ENCODE measurements at regions of chr15 and their contacts with region 1.

Region 1: DNA sequence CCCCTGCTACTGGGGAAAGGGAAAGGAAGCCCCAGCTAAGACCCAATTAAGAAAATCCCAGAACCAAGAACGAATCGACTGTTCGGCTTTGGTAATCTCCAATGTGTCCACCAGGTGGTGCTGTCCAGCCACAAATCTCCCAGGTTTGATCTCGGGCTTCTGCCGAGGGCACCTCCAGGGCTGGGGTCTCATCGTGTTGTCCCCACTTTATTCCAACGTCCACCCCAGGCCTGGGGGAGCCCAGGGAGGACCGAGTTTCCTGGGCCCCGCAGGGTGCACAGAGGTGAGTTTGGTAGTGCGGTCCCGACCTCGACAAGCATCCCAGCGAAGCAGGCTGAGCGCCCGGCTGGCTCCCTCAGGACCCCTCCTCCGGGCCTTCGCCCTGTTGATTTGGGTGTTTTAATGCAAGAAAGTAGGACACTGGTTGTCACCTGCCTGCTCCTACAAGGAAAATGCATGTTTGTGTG is 185.1 kb downstream of the GOLGA6L6 start:
- DNase-seq: peak; percentile 63 to 87 (median 80)
- H3K4me3 ChIP-seq: no peak overlapping the region
- H3K4me3 Mint-ChIP-seq: peak overlapping the region in 1 of 8 donors; percentile 53
- H3K27ac ChIP-seq: no peak overlapping the region
- H3K27ac Mint-ChIP-seq: peak overlapping the region in 5 of 7 donors; percentile 11 to 85 (median 48)
- H3K4me1 ChIP-seq: peaks cover 29% of the 10 kb centered on the region
- H3K4me1 Mint-ChIP-seq: peaks cover 3 to 13% (median 6%) of the 10 kb centered on the region in 4 donors
- H3K27me3 ChIP-seq: no peaks in the 10 kb centered on the region
- H3K27me3 Mint-ChIP-seq: peaks cover 0 to 2% of the 10 kb centered on the region in 2 donors

Region 2: DNA sequence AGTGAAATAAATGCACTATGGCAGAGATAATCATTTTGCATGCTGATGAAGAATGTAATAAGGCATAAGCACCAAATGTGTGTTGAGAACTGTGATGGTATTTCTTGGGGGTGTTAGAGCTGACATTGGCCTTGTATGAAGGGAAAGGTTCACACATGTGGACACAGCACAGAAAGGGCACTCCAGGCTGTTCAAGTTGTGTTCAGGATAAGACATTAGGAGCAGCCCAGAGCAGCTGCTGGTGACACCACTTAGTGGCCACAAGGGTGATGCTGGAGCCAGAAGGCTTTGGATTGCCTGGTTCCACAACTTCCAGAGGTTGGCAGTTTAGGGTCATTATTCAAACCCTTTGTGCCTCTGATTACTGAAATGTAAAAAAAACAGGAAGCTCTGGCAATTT is 29.7 kb after region 1 on chr15:
- CTCF ChIA-PET with region 1: no interaction called
- POLR2A ChIA-PET with region 1: no interaction called
- intact Hi-C with region 1: loop called (anchors 2 kb)
- DNase-seq: no peak
- H3K4me3 ChIP-seq: no peak overlapping the region
- H3K4me3 Mint-ChIP-seq: no peak overlapping the region
- H3K27ac ChIP-seq: no peak overlapping the region
- H3K27ac Mint-ChIP-seq: no peak overlapping the region
- H3K4me1 ChIP-seq: no peaks in the 10 kb centered on the region
- H3K4me1 Mint-ChIP-seq: no peaks in the 10 kb centered on the region
- H3K27me3 ChIP-seq: no peaks in the 10 kb centered on the region
- H3K27me3 Mint-ChIP-seq: no peaks in the 10 kb centered on the region

Region 3: GRCh38 chr15:22224241-22224671 is 1867.8 kb after region 1 on chr15:
- CTCF ChIA-PET with region 1: interaction called, 200 read pairs
- POLR2A ChIA-PET with region 1: interaction called, 8 read pairs
- intact Hi-C with region 1: no loop called
- DNase-seq: peak in 1 of 5 donors; percentile 22
- H3K4me3 ChIP-seq: no peak overlapping the region
- H3K4me3 Mint-ChIP-seq: peak overlapping the region in 3 of 8 donors; percentile 2 to 55 (median 22)
- H3K27ac ChIP-seq: no peak overlapping the region
- H3K27ac Mint-ChIP-seq: peak overlapping the region in 4 of 7 donors; percentile 0 to 92 (median 30)
- H3K4me1 ChIP-seq: peaks cover 26% of the 10 kb centered on the region
- H3K4me1 Mint-ChIP-seq: peaks cover 18 to 38% (median 32%) of the 10 kb centered on the region in 4 donors
- H3K27me3 ChIP-seq: no peaks in the 10 kb centered on the region
- H3K27me3 Mint-ChIP-seq: no peaks in the 10 kb centered on the region

Measured in CD4-positive, alpha-beta memory T cell (primary cell).